T-cell (primary cell): ENCODE measurements at regions of chr13 and their contacts with region 1.

Region 1: DNA sequence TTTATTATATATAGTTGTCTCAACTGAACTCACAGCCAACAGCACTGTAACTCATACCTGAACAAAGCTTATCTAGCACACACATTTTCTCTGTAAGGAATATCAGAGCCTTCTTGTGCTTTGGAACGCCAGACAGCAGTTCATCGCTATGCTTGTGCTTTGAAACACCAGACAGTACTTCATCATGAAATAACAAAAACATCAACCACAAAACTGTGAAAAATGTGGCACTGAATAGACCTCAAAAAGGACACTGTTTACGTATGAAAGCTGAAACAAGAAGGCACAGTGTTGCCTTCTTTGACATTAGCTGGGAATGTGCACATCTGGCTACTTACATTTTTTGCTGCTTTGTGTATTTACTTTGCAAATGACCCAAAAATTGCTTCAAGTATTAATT is 160.2 kb downstream of the PDS5B start:
- DNase-seq: peak in 1 of 35 experiments; percentile 18
- ATAC-seq: no peak
- H3K4me3 ChIP-seq: no peak overlapping the region
- H3K4me3 Mint-ChIP-seq: no peak overlapping the region
- H3K27ac ChIP-seq: no peak overlapping the region
- H3K27ac Mint-ChIP-seq: no peak overlapping the region
- H3K4me1 ChIP-seq: no peaks in the 10 kb centered on the region
- H3K4me1 Mint-ChIP-seq: no peaks in the 10 kb centered on the region
- H3K27me3 ChIP-seq: no peaks in the 10 kb centered on the region
- H3K27me3 Mint-ChIP-seq: no peaks in the 10 kb centered on the region

Region 2: DNA sequence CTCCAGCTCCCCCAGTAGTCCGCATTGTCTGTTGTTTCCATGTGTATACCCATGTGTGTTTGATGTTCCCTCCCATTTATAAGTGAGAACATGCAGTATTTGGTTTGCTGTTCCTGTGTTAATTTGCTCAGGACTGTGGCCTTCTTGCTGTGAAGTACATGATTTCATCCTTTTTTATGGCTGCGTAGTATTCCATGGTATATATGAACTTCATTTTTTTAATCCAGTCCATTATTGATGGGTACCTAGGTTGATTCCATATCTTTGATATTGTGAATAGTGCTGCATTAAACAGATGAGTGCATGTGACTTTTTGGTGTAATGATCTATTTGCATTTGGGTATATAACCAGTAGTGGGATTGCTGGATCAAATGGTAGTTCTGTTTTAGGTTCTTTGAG is 15.0 kb after region 1 on chr13:
- CTCF ChIA-PET with region 1: interaction called, 4 to 10 read pairs
- POLR2A ChIA-PET with region 1: interaction called in 1 of 2 experiments, 7 read pairs
- DNase-seq: no peak
- ATAC-seq: no peak
- H3K4me3 ChIP-seq: no peak overlapping the region
- H3K4me3 Mint-ChIP-seq: no peak overlapping the region
- H3K27ac ChIP-seq: no peak overlapping the region
- H3K27ac Mint-ChIP-seq: no peak overlapping the region
- H3K4me1 ChIP-seq: no peaks in the 10 kb centered on the region
- H3K4me1 Mint-ChIP-seq: no peaks in the 10 kb centered on the region
- H3K27me3 ChIP-seq: no peaks in the 10 kb centered on the region
- H3K27me3 Mint-ChIP-seq: no peaks in the 10 kb centered on the region